Dendritic cell treated with granulocyte-macrophage colony-stimulating factor and Interleukin-4, amounts not matched to agents 40 ng/mL and 50 ng/mL, for 4 days (primary cell): ENCODE measurements at regions of chr7 and their contacts with region 1.

Region 1: GRCh38 chr7:75534727-75535307 is 42.7 kb downstream of the SPDYE5 start:
- H3K4me3 Mint-ChIP-seq: no peak overlapping the region
- H3K27ac Mint-ChIP-seq: peak overlapping the region; percentile 77
- H3K4me1 Mint-ChIP-seq: peaks cover 18% of the 10 kb centered on the region
- H3K27me3 Mint-ChIP-seq: no peaks in the 10 kb centered on the region

Region 2: DNA sequence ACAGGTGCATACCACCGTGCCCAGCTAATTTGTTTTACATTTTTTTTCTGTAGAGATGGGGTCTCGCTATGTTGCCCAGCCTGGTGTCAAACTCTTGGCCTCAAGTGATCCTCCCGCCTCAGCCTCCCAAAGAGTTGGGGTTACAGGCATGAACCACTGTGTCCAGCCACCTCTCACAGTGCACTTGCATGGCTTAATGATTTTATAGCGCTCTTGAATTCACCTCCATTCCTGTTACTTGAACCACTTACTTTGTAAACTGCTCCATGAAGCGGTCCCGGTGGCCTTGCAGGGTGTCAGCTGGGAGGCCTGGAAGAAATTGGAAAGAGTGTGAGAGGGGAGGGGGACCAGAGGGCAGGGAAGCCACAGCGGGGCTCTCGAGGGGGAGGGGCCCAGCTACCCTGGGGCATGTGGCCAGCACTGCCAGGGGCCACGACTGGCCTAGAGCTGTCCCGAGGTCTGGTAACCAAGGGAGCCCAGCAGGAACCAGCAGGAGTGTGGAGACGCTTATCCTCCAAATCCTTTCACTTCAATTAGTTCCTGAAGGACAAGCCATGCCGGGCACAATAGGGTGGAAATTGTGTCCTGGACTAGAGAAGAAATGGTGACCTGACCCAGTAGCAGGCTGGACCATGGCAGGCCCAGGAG is 33.3 kb after region 1 on chr7:
- intact Hi-C with region 1: loop called (anchors 2 kb)
- H3K4me3 Mint-ChIP-seq: no peak overlapping the region
- H3K27ac Mint-ChIP-seq: peak overlapping the region; percentile 93
- H3K4me1 Mint-ChIP-seq: peaks cover 34% of the 10 kb centered on the region
- H3K27me3 Mint-ChIP-seq: no peaks in the 10 kb centered on the region